ENCODE measurements at regions of chr10 and their contacts with region 1.

Region 1: DNA sequence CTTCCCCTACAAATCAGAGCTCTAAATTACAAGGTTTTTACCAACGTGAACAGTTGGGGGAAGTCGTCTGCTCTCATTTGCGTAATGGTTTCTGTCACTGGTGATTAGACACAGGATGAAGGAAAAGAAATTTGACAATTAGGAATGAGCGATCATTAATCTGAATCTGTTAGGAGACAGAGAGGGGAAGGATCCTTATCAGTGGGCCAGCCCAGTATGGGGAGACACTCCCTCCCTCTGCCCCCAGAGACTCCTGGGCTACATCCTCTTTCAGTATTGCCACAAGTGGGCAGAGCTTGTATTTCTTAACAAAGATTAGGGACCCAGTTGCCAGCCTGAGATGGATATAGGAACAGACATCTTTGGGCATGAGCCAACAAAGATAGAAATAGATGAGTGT is 15.5 kb downstream of the HIF1AN start:
- DNase-seq: no peak
- H3K4me3 Mint-ChIP-seq: no peak overlapping the region
- H3K27ac Mint-ChIP-seq: no peak overlapping the region
- H3K4me1 Mint-ChIP-seq: peaks cover 2% of the 10 kb centered on the region
- H3K27me3 Mint-ChIP-seq: no peaks in the 10 kb centered on the region

Region 2: DNA sequence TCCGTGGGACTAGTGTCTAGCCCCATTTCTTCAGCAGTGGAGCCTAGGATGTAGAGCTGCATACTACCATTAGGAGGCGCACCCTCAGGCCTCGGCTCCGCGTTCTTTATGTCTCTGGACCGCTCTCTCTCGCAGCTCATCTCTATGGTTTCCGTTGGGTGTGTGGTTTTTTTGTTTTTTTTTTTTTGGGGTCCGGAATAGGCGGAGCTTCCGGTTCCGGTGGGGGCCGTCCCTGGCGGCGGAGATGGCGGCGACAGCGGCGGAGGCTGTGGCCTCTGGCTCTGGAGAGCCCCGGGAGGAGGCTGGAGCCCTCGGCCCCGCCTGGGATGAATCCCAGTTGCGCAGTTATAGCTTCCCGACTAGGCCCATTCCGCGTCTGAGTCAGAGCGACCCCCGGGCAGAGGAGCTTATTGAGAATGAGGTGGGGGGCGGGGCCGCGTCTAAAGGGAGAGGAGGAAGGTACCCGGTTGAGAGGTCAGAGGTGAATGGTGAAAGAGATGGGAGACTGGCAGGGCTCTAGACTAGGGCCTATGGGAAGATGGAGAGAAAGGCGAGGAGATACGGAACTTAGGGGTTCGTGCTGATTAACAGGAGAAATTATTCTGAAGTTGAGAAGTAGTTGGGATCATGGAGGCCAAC is 15.4 kb before region 1 on chr10 and contains the start of gene HIF1AN:
- CTCF ChIA-PET with region 1: interaction called, 10 read pairs
- POLR2A ChIA-PET with region 1: interaction called, 12 read pairs
- DNase-seq: peak; percentile 92
- H3K4me3 Mint-ChIP-seq: no peak within 1 kb of the TSS
- H3K27ac Mint-ChIP-seq: peak within 1 kb of the TSS; percentile 22
- H3K4me1 Mint-ChIP-seq: peaks cover 16% of the 10 kb centered on the region
- H3K27me3 Mint-ChIP-seq: no peaks in the 10 kb centered on the region
- total RNA-seq, gene HIF1AN: 57.7 to 58.8 TPM

Region 3: DNA sequence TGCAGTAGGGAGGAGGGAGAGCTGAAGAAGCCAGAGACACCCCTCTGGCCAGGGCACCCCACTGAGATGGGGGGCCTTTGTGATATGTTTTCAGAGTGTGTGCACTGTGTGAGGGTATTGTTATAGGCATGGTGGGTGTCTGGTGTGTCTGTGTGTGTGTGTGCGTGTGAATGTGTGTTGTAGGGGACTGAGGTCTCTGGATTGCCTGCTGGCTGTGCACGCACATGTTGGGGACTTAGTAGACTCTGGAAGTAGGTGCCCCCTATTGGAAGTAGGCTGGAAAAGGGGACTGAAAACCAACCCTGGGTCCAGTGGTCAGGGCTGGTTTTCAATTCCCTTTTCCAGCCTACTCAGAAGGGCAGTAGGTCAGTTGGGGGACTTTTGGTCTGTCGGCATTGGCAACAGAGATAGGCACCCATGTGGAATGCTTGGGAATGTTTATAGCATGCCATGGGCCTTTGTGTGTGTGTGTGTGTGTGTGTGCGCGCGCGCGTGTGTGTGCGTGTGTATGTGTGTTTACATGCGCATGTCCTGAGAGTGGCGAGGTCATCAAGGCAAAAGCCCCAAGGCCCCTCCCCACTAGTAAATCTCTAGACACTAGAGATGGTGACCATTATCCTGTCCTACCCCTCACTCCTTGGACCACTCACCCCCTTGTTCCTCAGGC is 63.4 kb after region 1 on chr10:
- CTCF ChIA-PET with region 1: no interaction called
- POLR2A ChIA-PET with region 1: no interaction called
- DNase-seq: no peak
- H3K4me3 Mint-ChIP-seq: no peak overlapping the region
- H3K27ac Mint-ChIP-seq: no peak overlapping the region
- H3K4me1 Mint-ChIP-seq: no peaks in the 10 kb centered on the region
- H3K27me3 Mint-ChIP-seq: peaks cover 61% of the 10 kb centered on the region